ENCODE measurements at regions of chr1 and their contacts with region 1.

Region 1: GRCh38 chr1:82371844-82372498 is 571.2 kb downstream of the ADGRL2 start:
- DNase-seq: no peak
- ATAC-seq: no peak
- H3K4me3 ChIP-seq: no peak overlapping the region
- H3K27ac ChIP-seq: no peak overlapping the region
- H3K4me1 ChIP-seq: no peaks in the 10 kb centered on the region
- H3K27me3 ChIP-seq: no peaks in the 10 kb centered on the region
- CTCF ChIP-seq: no peak
- EP300 ChIP-seq: no peak
- POLR2A ChIP-seq: no peak
- RAD21 ChIP-seq: no peak

Region 2: GRCh38 chr1:82346141-82346540 is 25.8 kb before region 1 on chr1:
- CTCF ChIA-PET with region 1: no interaction called
- POLR2A ChIA-PET with region 1: no interaction called
- in situ Hi-C with region 1: no loop called
- intact Hi-C with region 1: loop called (anchors 1 kb)
- DNase-seq: no peak
- ATAC-seq: no peak
- H3K4me3 ChIP-seq: no peak overlapping the region
- H3K27ac ChIP-seq: no peak overlapping the region
- H3K4me1 ChIP-seq: no peaks in the 10 kb centered on the region
- H3K27me3 ChIP-seq: no peaks in the 10 kb centered on the region
- CTCF ChIP-seq: no peak
- EP300 ChIP-seq: no peak
- POLR2A ChIP-seq: no peak
- RAD21 ChIP-seq: no peak

Measured in HepG2 (cell line).